AG04449 (cell line): ENCODE measurements at regions of chr11 and their contacts with region 1.

Region 1: GRCh38 chr11:130916238-130916855 is at the start of gene SNX19:
- DNase-seq: no peak
- H3K4me3 ChIP-seq: peak within 1 kb of the TSS; percentile 87
- CTCF ChIP-seq: peak; percentile 94

Region 2: DNA sequence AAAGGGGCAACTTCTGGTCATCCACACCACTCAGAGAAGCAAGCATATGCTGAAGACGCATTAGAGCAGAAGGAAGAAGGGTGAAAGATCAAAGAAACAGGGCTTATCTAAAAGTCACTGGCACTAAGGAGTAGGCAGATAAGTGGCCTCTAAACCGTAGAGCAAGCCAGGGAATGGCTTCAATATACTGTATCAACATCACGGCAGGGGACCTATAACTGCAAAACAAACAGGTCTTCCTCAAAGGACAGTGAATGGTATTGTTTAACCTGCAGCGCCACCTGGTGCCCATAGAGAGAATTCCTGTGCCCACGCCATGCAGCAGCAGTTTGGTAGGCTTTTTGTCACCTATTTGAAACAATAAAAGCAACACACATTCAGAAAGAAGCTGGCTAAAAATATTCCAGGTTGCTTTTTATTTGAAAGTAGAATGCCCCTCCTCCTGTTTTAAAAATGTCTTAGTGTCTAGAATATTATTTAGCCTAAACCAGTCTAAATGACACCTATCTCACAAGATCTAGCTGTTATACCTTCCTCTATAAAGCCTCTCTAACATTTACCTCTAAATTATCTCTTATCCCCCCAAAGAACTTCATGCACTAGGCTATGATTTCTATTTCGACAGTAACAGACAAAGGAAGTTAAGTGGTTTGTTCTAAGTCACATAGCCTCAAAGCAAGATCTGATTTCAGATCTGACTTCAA is 21.9 kb before region 1 on chr11:
- CTCF ChIA-PET with region 1: interaction called, 304 read pairs
- POLR2A ChIA-PET with region 1: interaction called, 5 read pairs
- DNase-seq: no peak
- H3K4me3 ChIP-seq: no peak overlapping the region
- CTCF ChIP-seq: peak; percentile 85

Region 3: DNA sequence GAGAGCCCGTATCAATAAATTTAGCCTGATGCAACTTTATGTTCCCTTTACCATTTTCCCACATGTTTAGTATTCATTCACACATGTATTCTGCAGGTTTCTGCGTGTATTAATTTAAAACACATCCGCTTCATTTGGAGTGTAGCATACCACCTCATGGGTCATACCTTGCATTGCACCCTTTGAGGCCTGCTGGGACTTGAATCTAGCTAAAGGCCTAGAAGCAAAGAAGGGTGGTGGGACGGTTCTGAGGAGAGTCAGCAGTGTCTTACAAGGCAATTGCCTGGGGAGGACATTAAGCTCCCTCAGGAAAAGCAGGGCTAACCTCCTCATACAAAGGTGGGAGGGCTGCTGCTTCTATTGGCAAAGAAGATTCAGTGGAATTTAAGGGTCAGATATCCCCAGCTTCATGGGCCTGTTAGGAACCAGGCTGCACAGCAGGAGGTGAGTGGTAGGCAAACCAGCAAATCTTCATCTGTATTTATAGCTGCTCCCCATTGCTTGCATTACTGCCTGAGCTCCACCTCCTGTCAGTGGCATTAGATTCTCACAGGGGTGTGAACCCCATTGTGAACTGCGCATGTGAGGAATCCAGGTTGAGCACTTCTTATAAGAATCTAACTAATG is 15.9 kb after region 1 on chr11:
- CTCF ChIA-PET with region 1: interaction called, 22 read pairs
- POLR2A ChIA-PET with region 1: interaction called, 3 read pairs
- DNase-seq: no peak
- H3K4me3 ChIP-seq: no peak overlapping the region
- CTCF ChIP-seq: no peak

Region 4: GRCh38 chr11:130940706-130941105 is 24.4 kb after region 1 on chr11:
- CTCF ChIA-PET with region 1: interaction called, 16 read pairs
- POLR2A ChIA-PET with region 1: no interaction called
- DNase-seq: no peak
- H3K4me3 ChIP-seq: no peak overlapping the region
- CTCF ChIP-seq: no peak

Region 5: GRCh38 chr11:130979386-130979972 is 63.1 kb after region 1 on chr11:
- CTCF ChIA-PET with region 1: interaction called, 12 read pairs
- POLR2A ChIA-PET with region 1: no interaction called
- DNase-seq: no peak
- H3K4me3 ChIP-seq: no peak overlapping the region
- CTCF ChIP-seq: peak; percentile 48